ENCODE measurements at regions of chr7 and their contacts with region 1.

Region 1: GRCh38 chr7:108452722-108453121 is 3.5 kb downstream of the NRCAM start:
- DNase-seq: no peak
- H3K4me3 ChIP-seq: no peak overlapping the region
- H3K27ac ChIP-seq: no peak overlapping the region
- H3K4me1 ChIP-seq: peaks cover 6 to 13% (median 10%) of the 10 kb centered on the region in 4 experiments; a peak in 5 of 7 replicates
- H3K27me3 ChIP-seq: peaks cover 6 to 35% (median 26%) of the 10 kb centered on the region in 4 experiments
- CTCF ChIP-seq: peak in 2 of 3 experiments; percentile 63 to 72; a peak in 3 of 4 replicates
- EP300 ChIP-seq: no peak
- POLR2A ChIP-seq: no peak
- RAD21 ChIP-seq: peak; percentile 53 to 65

Region 2: GRCh38 chr7:108189733-108190388 is 262.9 kb before region 1 on chr7:
- CTCF ChIA-PET with region 1: interaction called, 10 read pairs
- POLR2A ChIA-PET with region 1: interaction called, 3 read pairs
- DNase-seq: no peak
- H3K4me3 ChIP-seq: no peak overlapping the region
- H3K27ac ChIP-seq: no peak overlapping the region
- H3K4me1 ChIP-seq: peaks cover 0 to 5% (median 1%) of the 10 kb centered on the region in 4 experiments; a peak in 2 of 7 replicates
- H3K27me3 ChIP-seq: no peaks in the 10 kb centered on the region
- CTCF ChIP-seq: no peak
- EP300 ChIP-seq: no peak
- POLR2A ChIP-seq: no peak
- RAD21 ChIP-seq: no peak

Region 3: DNA sequence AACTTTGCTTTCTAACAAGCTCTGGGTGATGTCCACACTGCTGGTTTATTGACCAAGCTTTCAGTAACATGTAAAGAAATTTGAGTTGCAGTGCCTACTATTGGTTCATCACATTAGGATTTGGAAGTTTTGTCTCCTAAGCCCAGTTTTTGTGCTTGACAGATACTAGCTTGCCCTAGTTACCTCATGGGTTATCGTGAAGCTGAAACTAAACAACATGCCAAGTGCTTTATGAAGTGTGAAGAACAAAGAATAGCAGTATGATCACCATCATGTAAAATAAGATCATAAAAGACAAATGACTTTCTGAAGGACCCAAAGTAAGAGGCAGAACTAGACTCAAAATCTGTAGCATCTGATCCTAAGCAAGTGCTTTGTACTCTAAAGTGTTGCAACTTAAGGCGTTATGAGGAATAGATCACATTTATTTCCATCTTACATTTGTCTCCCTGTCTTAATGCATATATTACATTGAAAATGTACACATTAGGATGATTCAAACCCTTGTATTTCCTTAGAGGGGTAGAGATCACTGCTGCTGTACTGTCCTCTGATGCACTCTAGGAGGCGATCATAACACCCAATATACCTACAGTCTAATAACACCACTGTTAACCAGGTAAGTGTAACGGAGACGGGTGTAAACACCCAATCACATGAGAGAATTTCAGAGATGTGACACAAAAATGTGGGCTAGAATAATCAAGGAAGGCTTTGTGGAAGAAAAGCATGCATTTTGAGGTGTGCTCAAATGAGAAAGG is 67.8 kb before region 1 on chr7:
- CTCF ChIA-PET with region 1: interaction called, 19 read pairs
- POLR2A ChIA-PET with region 1: no interaction called
- DNase-seq: no peak
- H3K4me3 ChIP-seq: no peak overlapping the region
- H3K27ac ChIP-seq: no peak overlapping the region
- H3K4me1 ChIP-seq: no peaks in the 10 kb centered on the region
- H3K27me3 ChIP-seq: no peaks in the 10 kb centered on the region
- CTCF ChIP-seq: peak in 2 of 3 experiments; percentile 44 to 68; a peak in 3 of 4 replicates
- EP300 ChIP-seq: no peak
- POLR2A ChIP-seq: no peak
- RAD21 ChIP-seq: peak; percentile 53 to 67

Region 4: DNA sequence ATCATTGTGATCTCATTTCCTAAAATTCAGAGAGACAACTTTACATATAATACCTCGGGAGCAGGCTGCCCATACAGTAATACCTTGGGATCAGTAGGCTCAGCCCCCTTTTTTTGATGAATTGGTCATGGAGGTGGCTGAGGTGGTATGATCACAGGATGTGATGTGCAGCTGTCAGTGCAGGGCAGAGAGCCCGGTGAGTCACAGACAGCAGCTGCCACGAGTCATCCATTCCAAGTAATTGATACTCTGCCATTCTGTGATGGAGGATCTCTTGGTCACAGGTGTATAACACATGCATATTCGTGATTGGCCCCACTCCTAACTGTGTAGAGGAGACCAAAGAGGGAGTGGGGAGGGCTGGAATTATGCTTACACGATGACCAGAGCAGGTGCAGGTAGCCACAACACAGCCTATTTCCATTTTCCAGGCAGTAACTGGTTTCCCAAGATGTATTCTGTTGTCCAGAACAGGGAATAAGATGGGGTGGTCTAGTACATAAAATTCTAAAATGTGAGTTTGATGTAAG is 10.6 kb before region 1 on chr7:
- CTCF ChIA-PET with region 1: interaction called, 37 read pairs
- POLR2A ChIA-PET with region 1: no interaction called
- DNase-seq: no peak
- H3K4me3 ChIP-seq: no peak overlapping the region
- H3K27ac ChIP-seq: no peak overlapping the region
- H3K4me1 ChIP-seq: no peaks in the 10 kb centered on the region
- H3K27me3 ChIP-seq: no peaks in the 10 kb centered on the region
- CTCF ChIP-seq: no peak
- EP300 ChIP-seq: no peak
- POLR2A ChIP-seq: no peak
- RAD21 ChIP-seq: no peak

Region 5: DNA sequence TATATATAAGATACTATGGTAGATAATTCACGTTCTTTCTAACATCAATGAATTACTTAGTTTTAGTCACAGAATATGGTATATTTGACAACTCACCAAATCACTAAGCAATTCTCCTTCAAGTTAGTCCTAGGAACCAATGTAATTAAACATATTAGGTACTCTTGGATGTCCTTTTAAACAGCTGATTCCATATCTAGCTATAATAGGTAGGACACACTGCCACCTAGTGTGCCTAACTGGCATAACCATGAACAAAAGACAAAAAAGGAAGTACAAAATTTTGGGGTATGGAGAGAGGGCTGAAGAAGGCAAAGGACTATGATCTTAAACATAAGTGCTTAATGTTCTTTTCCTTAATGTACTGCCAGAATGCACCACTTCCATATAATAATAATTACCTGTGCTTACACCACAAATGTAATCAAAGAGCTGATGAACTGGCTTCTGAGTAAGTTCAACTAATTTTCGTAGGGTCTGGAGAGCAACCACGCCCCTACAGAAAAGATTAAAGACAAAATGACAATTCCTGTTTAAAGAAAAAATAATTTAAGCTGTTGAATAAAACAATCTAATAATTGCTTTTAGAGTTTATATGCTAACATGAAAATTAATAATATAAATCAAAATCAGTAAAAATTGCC is 44.5 kb after region 1 on chr7:
- CTCF ChIA-PET with region 1: interaction called, 14 read pairs
- POLR2A ChIA-PET with region 1: no interaction called
- DNase-seq: peak in 1 of 2 experiments; percentile 62
- H3K4me3 ChIP-seq: no peak overlapping the region
- H3K27ac ChIP-seq: no peak overlapping the region
- H3K4me1 ChIP-seq: no peaks in the 10 kb centered on the region
- H3K27me3 ChIP-seq: no peaks in the 10 kb centered on the region
- CTCF ChIP-seq: peak in 2 of 3 experiments; percentile 58 to 75; a peak in 2 of 4 replicates
- EP300 ChIP-seq: no peak
- POLR2A ChIP-seq: no peak
- RAD21 ChIP-seq: peak; percentile 80 to 84

Region 6: GRCh38 chr7:108605559-108606201 is 153.0 kb after region 1 on chr7:
- CTCF ChIA-PET with region 1: no interaction called
- POLR2A ChIA-PET with region 1: no interaction called
- DNase-seq: no peak
- H3K4me3 ChIP-seq: no peak overlapping the region
- H3K27ac ChIP-seq: no peak overlapping the region
- H3K4me1 ChIP-seq: peaks cover 0 to 1% (median 0%) of the 10 kb centered on the region in 4 experiments; a peak in 2 of 7 replicates
- H3K27me3 ChIP-seq: no peaks in the 10 kb centered on the region
- CTCF ChIP-seq: no peak
- EP300 ChIP-seq: no peak
- POLR2A ChIP-seq: no peak
- RAD21 ChIP-seq: no peak

Measured in H1 (cell line).